CD8-positive, alpha-beta T cell (primary cell): ENCODE measurements at regions of chr7 and their contacts with region 1.

Region 1: GRCh38 chr7:100691676-100692577 is 2.1 kb downstream of the GIGYF1 start:
- DNase-seq: peak; percentile 63 to 88 (median 82)
- ATAC-seq: peak; percentile 71
- H3K4me3 ChIP-seq: peak overlapping the region in 1 of 2 experiments; percentile 72
- H3K4me3 Mint-ChIP-seq: peak overlapping the region; percentile 94
- H3K27ac ChIP-seq: no peak overlapping the region
- H3K27ac Mint-ChIP-seq: peak overlapping the region; percentile 90
- H3K4me1 ChIP-seq: peaks cover 53% of the 10 kb centered on the region
- H3K4me1 Mint-ChIP-seq: peaks cover 42% of the 10 kb centered on the region
- H3K27me3 ChIP-seq: no peaks in the 10 kb centered on the region
- H3K27me3 Mint-ChIP-seq: no peaks in the 10 kb centered on the region
- CTCF ChIP-seq: peak; percentile 83

Region 2: GRCh38 chr7:100586266-100587025 is 105.5 kb before region 1 on chr7 and contains the start of gene FBXO24:
- CTCF ChIA-PET with region 1: interaction called, 41 read pairs
- POLR2A ChIA-PET with region 1: interaction called, 13 read pairs
- intact Hi-C with region 1: loop called in 1 of 2 experiments (anchors 1 kb)
- DNase-seq: peak; percentile 98 to 100 (median 99)
- ATAC-seq: peak; percentile 80
- H3K4me3 ChIP-seq: peak within 1 kb of the TSS; percentile 93 to 96
- H3K4me3 Mint-ChIP-seq: peak within 1 kb of the TSS; percentile 96
- H3K27ac ChIP-seq: peak within 1 kb of the TSS; percentile 74 to 94
- H3K27ac Mint-ChIP-seq: peak within 1 kb of the TSS; percentile 57
- H3K4me1 ChIP-seq: peaks cover 22% of the 10 kb centered on the region
- H3K4me1 Mint-ChIP-seq: peaks cover 39% of the 10 kb centered on the region
- H3K27me3 ChIP-seq: no peaks in the 10 kb centered on the region
- H3K27me3 Mint-ChIP-seq: peaks cover 3% of the 10 kb centered on the region
- CTCF ChIP-seq: no peak
- total RNA-seq, gene FBXO24: 0.30 to 0.53 TPM

Region 3: GRCh38 chr7:100611974-100612729 is 79.8 kb before region 1 on chr7 and contains the start of gene MOSPD3:
- CTCF ChIA-PET with region 1: interaction called, 54 read pairs
- POLR2A ChIA-PET with region 1: interaction called, 6 read pairs
- intact Hi-C with region 1: loop called (anchors 2 kb)
- DNase-seq: peak; percentile 96 to 100 (median 98)
- ATAC-seq: peak; percentile 89
- H3K4me3 ChIP-seq: peak within 1 kb of the TSS; percentile 68 to 96
- H3K4me3 Mint-ChIP-seq: peak within 1 kb of the TSS; percentile 99
- H3K27ac ChIP-seq: peak within 1 kb of the TSS; percentile 93 to 98
- H3K27ac Mint-ChIP-seq: peak within 1 kb of the TSS; percentile 100
- H3K4me1 ChIP-seq: peaks cover 19% of the 10 kb centered on the region
- H3K4me1 Mint-ChIP-seq: peaks cover 24% of the 10 kb centered on the region
- H3K27me3 ChIP-seq: no peaks in the 10 kb centered on the region
- H3K27me3 Mint-ChIP-seq: no peaks in the 10 kb centered on the region
- CTCF ChIP-seq: no peak
- total RNA-seq, gene MOSPD3: 10.3 to 10.5 TPM

Region 4: GRCh38 chr7:100632951-100633717 is 58.8 kb before region 1 on chr7:
- CTCF ChIA-PET with region 1: interaction called, 28 read pairs
- POLR2A ChIA-PET with region 1: interaction called, 4 read pairs
- intact Hi-C with region 1: loop called (anchors 1 to 5 kb)
- DNase-seq: peak in 7 of 9 experiments; percentile 34 to 81 (median 60)
- ATAC-seq: peak; percentile 77
- H3K4me3 ChIP-seq: peak overlapping the region; percentile 69 to 82
- H3K4me3 Mint-ChIP-seq: peak overlapping the region; percentile 77
- H3K27ac ChIP-seq: peak overlapping the region in 1 of 2 experiments; percentile 50
- H3K27ac Mint-ChIP-seq: no peak overlapping the region
- H3K4me1 ChIP-seq: peaks cover 8% of the 10 kb centered on the region
- H3K4me1 Mint-ChIP-seq: peaks cover 21% of the 10 kb centered on the region
- H3K27me3 ChIP-seq: no peaks in the 10 kb centered on the region
- H3K27me3 Mint-ChIP-seq: no peaks in the 10 kb centered on the region
- CTCF ChIP-seq: peak; percentile 36